Right ventricle myocardium inferior (tissue), 1 donor: ENCODE measurements at regions of chr6 and their contacts with region 1.

Region 1: GRCh38 chr6:17392978-17393891 is at the start of gene CAP2:
- DNase-seq: peak; percentile 81
- ATAC-seq: peak; percentile 93
- total RNA-seq, gene CAP2: 137 TPM

Region 2: DNA sequence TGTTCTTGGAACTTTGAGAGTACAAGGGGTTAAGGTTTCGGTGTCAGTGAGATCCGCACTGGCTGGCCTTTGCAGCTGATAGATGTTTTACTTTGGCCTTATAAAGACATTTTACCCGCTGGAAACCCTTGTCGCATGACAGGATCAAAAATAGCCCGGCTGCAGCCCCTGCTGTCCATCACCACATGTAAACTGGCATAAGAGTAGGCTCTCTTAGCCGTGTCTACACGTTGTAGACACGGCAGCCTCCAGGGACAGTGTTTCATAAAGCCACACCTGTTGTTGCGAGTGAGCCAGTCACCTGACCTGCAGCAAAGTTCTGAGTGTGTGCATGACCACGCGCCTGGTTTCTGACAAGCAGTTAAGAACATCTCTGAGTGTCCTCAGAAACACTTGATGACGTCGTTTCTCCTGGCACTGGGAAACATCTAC is 103.6 kb before region 1 on chr6:
- intact Hi-C with region 1: loop called (anchors 5 kb)
- DNase-seq: peak; percentile 79
- ATAC-seq: peak; percentile 93

Region 3: DNA sequence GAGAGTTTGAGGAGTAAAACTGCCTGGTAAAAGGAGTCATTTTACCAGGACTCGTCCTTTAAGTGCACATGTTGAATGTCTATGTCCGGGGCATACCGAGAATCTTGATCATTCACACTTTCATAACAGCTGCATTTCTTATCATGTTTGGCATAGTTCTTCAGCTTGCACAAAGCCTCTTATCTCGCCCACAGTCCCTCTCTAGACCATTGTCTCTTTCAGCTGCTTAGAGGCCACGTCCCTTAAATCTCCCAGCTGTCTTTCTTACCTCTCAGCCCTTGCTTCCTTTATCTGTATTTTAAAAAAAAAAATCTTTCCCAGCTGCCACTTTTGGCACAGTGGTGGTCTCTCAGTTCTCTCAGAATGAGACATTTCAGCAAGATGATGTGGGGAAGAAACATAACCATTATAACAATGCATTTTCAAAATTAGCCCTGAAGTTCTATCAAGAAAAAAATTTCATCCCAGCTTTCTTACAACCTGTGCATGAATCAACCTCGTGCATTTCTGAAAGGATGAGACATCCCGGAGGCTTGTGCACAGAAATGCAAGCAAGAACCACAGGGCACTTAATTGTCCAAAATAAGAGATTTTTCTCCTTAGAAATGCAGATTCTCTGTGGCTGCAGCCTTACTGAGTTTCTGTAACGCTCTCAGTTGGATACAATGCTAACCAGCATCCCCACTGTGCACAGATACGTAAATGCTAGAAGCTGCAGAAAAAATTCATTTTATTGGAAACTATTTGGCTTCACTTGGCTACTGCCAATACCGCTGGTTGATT is 87.8 kb before region 1 on chr6:
- intact Hi-C with region 1: loop called (anchors 5 kb)
- DNase-seq: no peak
- ATAC-seq: no peak